ENCODE measurements at regions of chr19 and their contacts with region 1.

Region 1: GRCh38 chr19:5057861-5058260 is 88.9 kb downstream of the KDM4B start:
- DNase-seq: no peak
- ATAC-seq: no peak
- H3K4me3 ChIP-seq: no peak overlapping the region
- H3K27ac ChIP-seq: peak overlapping the region in 1 of 4 donors; percentile 92
- H3K4me1 ChIP-seq: peaks cover 8 to 20% of the 10 kb centered on the region in 2 donors
- H3K27me3 ChIP-seq: no peaks in the 10 kb centered on the region
- CTCF ChIP-seq: no peak
- POLR2A ChIP-seq: no peak

Region 2: GRCh38 chr19:4815426-4816201 is 242.2 kb before region 1 on chr19:
- in situ Hi-C with region 1: no loop called
- intact Hi-C with region 1: no loop called
- DNase-seq: peak; percentile 93 to 94
- ATAC-seq: peak; percentile 78
- H3K4me3 ChIP-seq: peak overlapping the region; percentile 33 to 48 (median 36)
- H3K27ac ChIP-seq: peak overlapping the region; percentile 95 to 97 (median 96)
- H3K4me1 ChIP-seq: peaks cover 38 to 41% of the 10 kb centered on the region in 2 donors
- H3K27me3 ChIP-seq: no peaks in the 10 kb centered on the region
- CTCF ChIP-seq: no peak
- POLR2A ChIP-seq: peak in 1 of 2 donors; percentile 19

Region 3: GRCh38 chr19:5086725-5087439 is 29.0 kb after region 1 on chr19:
- in situ Hi-C with region 1: no loop called
- intact Hi-C with region 1: loop called (anchors 2 kb)
- DNase-seq: peak; percentile 56 to 63
- ATAC-seq: peak; percentile 46 to 63
- H3K4me3 ChIP-seq: no peak overlapping the region
- H3K27ac ChIP-seq: peak overlapping the region in 3 of 4 donors; percentile 17 to 58 (median 37)
- H3K4me1 ChIP-seq: peaks cover 13% of the 10 kb centered on the region in 2 donors
- H3K27me3 ChIP-seq: no peaks in the 10 kb centered on the region
- CTCF ChIP-seq: peak in 3 of 5 experiments; percentile 45 to 48 (median 47)
- POLR2A ChIP-seq: no peak

Region 4: GRCh38 chr19:5099701-5100221 is 41.9 kb after region 1 on chr19:
- in situ Hi-C with region 1: no loop called
- intact Hi-C with region 1: no loop called
- DNase-seq: no peak
- ATAC-seq: no peak
- H3K4me3 ChIP-seq: no peak overlapping the region
- H3K27ac ChIP-seq: no peak overlapping the region
- H3K4me1 ChIP-seq: peaks cover 26 to 28% of the 10 kb centered on the region in 2 donors
- H3K27me3 ChIP-seq: no peaks in the 10 kb centered on the region
- CTCF ChIP-seq: no peak
- POLR2A ChIP-seq: no peak

Region 5: GRCh38 chr19:5577785-5578493 is 520.1 kb after region 1 on chr19:
- in situ Hi-C with region 1: loop called in 1 of 4 experiments (anchors 25 kb)
- intact Hi-C with region 1: no loop called
- DNase-seq: peak in 1 of 2 donors; percentile 31
- ATAC-seq: peak; percentile 66 to 69
- H3K4me3 ChIP-seq: no peak overlapping the region
- H3K27ac ChIP-seq: no peak overlapping the region
- H3K4me1 ChIP-seq: peaks cover 4 to 6% of the 10 kb centered on the region in 2 donors
- H3K27me3 ChIP-seq: no peaks in the 10 kb centered on the region
- CTCF ChIP-seq: peak; percentile 85 to 99 (median 90)
- POLR2A ChIP-seq: no peak

Measured in gastrocnemius medialis (tissue), 4 donors.